ENCODE measurements at regions of chr17 and their contacts with region 1.

Region 1: DNA sequence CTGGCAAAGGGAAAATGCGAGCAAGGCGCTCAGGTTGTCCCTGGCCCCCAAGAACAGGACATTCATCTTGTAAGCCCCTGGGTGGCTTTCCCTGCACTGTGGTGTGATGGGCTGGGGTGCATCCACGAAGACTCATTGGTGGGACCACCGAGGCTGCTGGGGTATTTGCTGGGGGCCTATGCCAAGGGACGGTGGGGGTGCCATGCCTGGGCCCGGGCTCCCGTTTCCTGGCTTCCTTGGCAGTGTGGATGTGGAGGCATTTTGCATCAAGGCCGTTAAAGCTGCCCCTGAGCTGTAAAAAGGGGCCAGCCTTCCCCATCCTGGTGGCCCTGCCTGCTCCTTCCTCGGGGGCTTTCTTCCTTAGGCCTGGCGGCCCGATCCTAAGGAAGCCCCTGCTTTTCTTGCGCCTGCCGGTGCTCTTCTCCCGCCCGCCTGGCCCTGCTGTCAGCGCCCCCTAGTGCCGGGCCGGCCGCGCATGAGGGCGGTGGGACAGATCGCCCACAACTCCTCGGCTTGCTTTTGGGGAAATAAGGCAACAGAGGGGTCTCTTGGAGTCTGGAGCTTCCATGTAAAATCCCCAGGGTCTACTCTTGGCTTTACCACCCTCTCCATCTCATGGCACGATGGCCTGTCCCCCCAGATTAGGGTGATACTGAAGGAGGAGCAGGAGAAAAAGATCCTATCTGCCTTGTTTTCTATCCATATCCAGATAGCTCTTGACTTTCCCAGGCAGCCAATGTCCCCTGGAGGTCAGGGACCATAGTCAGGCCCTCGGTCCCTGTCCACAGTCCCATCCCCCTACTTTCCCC is 9.8 kb upstream of the TBX2 start:
- DNase-seq: peak; percentile 13
- ATAC-seq: peak; percentile 62 to 73

Region 2: GRCh38 chr17:61002316-61002736 is 387.5 kb before region 1 on chr17:
- intact Hi-C with region 1: loop called in 1 of 2 experiments (anchors 5 kb)
- DNase-seq: no peak
- ATAC-seq: peak in 1 of 2 donors; percentile 53

Region 3: DNA sequence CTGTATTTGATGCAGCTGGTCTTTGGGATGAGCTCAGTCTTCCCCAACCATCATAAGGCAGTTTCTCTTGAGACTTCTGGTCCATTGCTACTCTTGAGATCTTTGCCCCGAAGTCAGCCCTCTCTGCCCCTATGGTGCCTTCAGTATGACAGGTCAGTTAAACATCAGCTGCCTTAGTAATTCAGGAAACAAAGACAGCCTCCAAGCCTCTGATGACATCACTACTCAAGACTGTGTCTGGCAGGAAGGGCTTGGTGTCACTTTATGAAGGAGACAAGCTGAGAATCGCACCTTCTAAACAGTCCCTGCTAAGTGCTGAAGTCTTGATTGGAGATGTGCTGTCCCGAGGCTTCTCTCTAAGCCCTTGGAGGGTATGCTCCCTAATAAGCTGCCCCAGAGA is 95.1 kb before region 1 on chr17:
- intact Hi-C with region 1: no loop called
- DNase-seq: no peak
- ATAC-seq: peak in 1 of 2 donors; percentile 70